Lower lobe of right lung (tissue), 2 donors: ENCODE measurements at regions of chr14 and their contacts with region 1.

Region 1: DNA sequence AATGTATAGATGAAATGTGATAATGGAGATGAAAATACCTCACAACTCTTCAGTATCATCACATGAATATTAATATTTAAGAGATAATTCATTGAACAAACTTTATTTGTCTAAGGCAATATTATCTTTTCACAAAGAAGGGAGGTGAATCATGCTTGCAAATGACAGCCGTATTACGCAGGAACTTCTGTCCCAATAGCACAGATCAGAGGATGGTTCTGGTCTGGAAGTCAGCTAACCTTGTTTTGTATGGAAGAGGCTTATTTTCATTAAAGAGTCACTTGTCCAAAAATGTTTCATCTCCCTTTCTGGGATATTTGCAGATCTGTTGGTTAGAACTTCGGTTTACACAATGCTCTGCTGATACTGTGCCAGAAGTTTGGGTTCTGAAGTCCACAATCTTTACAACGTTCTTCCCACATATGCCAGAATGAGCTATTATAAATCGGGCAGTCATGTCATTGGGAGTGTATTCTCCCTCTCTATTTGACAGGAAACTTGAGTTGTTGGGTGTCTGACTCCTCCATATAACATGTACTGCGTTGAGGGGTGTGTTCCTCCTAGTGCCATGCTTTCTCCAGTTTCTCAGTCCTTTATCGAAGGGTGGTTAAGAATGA is 29.8 kb downstream of the YY1 start:
- DNase-seq: no peak
- ATAC-seq: no peak
- H3K4me3 ChIP-seq: no peak overlapping the region
- H3K27ac ChIP-seq: no peak overlapping the region
- H3K4me1 ChIP-seq: peaks cover 31% of the 10 kb centered on the region
- H3K27me3 ChIP-seq: no peaks in the 10 kb centered on the region
- CTCF ChIP-seq: no peak

Region 2: DNA sequence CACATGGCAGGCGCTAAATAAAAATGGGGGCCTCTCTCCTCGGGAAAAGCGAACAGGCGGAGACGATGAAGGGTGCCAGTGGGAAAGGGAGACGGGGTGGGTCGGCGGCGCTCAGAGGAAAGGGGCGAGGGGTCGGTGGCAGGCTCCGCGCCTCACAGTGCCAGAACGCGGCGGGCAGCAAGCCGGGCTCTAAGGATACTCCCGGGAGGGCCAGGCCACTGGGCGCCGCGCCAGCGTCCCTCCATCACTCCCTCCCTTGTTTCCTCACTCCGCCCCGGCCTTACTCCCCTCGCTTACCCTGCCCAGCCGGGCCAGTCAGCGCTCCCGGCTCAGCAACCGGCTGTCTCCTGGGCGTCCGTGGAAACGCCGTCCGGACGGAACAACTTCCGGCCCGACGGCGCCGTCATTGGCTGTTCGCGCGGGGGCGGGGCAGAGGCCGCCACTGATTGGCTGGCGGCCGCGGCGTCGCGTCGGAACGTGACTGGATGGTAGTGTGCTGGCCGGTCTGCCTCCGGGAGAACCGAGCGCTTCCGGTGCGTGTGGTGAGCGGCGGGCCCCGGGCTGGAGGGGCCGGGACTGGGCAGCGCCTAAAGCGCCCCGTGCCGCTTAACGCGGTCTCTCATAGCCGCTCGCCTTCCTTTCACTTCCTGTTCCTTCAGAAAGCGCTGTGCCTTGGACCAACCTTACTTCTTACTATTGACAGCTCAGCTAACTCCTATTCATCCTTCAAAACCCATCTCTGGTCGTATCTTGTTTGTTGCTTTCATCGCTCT is 107.5 kb after region 1 on chr14:
- intact Hi-C with region 1: loop called (anchors 5 kb)
- DNase-seq: peak; percentile 95
- ATAC-seq: peak; percentile 95
- H3K4me3 ChIP-seq: peak within 1 kb of the TSS; percentile 89
- H3K27ac ChIP-seq: peak within 1 kb of the TSS; percentile 94
- H3K4me1 ChIP-seq: peaks cover 39% of the 10 kb centered on the region
- H3K27me3 ChIP-seq: no peaks in the 10 kb centered on the region
- CTCF ChIP-seq: no peak